ENCODE measurements at regions of chr4 and their contacts with region 1.

Region 1: GRCh38 chr4:98179951-98180350 is 36.7 kb upstream of the STPG2 start:
- DNase-seq: no peak
- H3K4me3 ChIP-seq: no peak overlapping the region
- H3K27ac ChIP-seq: no peak overlapping the region
- H3K4me1 ChIP-seq: no peaks in the 10 kb centered on the region
- H3K27me3 ChIP-seq: no peaks in the 10 kb centered on the region
- CTCF ChIP-seq: no peak
- EP300 ChIP-seq: no peak
- POLR2A ChIP-seq: no peak

Region 2: DNA sequence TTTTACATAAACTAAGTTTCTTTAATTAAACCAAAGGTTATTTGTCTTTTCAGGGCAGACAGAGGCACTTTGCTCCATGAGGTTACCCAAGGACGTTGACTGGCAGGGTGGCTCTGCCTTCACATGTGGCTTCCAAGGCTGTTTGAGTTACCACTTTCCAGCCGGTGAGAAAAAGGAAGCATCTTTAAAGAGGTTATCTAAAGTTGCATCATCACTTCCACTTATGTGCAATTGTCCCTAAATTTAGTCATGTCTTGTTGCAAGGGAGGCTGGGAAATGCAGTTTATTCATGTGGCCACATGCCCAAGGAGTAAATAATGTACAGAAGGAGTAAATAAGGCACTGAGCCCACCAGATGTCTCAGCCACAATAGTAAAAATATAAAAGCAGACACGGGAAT is 52.3 kb after region 1 on chr4:
- intact Hi-C with region 1: loop called in 1 of 4 experiments (anchors 1 kb)
- DNase-seq: no peak
- H3K4me3 ChIP-seq: no peak overlapping the region
- H3K27ac ChIP-seq: no peak overlapping the region
- H3K4me1 ChIP-seq: no peaks in the 10 kb centered on the region
- H3K27me3 ChIP-seq: no peaks in the 10 kb centered on the region
- CTCF ChIP-seq: no peak
- EP300 ChIP-seq: no peak
- POLR2A ChIP-seq: no peak

Region 3: DNA sequence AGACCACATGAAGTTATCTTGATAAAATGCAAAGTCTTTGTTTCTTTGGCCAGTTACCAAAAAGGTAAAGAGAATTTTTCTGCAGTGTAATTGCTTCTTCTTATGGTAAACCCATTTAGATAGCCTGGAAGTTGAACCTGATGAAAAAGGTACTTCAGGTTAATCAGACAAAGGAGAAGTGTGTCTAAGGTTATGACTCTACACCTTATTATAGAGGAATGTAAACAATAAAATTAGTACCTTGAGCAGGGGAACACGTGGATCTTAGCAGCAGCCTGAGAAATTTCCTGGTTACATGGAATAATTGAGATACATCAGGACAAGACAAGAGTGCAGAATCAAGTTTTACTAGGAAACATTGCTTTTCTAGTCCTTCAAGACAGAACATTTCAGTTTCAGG is 152.1 kb after region 1 on chr4:
- intact Hi-C with region 1: no loop called
- DNase-seq: no peak
- H3K4me3 ChIP-seq: no peak overlapping the region
- H3K27ac ChIP-seq: no peak overlapping the region
- H3K4me1 ChIP-seq: no peaks in the 10 kb centered on the region
- H3K27me3 ChIP-seq: no peaks in the 10 kb centered on the region
- CTCF ChIP-seq: no peak
- EP300 ChIP-seq: no peak
- POLR2A ChIP-seq: no peak

Measured in ovary (tissue), 10 donors.